Activated B cell treated with CpG ODN at 0.5 μM for 24 hours (primary cell): ENCODE measurements at regions of chr7 and their contacts with region 1.

Region 1: GRCh38 chr7:1432411-1433082 is 26.7 kb downstream of the MICALL2 start:
- DNase-seq: peak; percentile 72
- ATAC-seq: peak; percentile 97
- H3K4me3 Mint-ChIP-seq: no peak overlapping the region
- H3K27ac Mint-ChIP-seq: no peak overlapping the region
- H3K4me1 Mint-ChIP-seq: peaks cover 3% of the 10 kb centered on the region
- H3K27me3 Mint-ChIP-seq: peaks cover 4% of the 10 kb centered on the region
- CTCF ChIP-seq: peak; percentile 95

Region 2: GRCh38 chr7:1225441-1226185 is 206.9 kb before region 1 on chr7:
- CTCF ChIA-PET with region 1: no interaction called
- POLR2A ChIA-PET with region 1: no interaction called
- intact Hi-C with region 1: loop called (anchors 1 kb)
- DNase-seq: no peak
- ATAC-seq: no peak
- H3K4me3 Mint-ChIP-seq: no peak overlapping the region
- H3K27ac Mint-ChIP-seq: peak overlapping the region; percentile 9
- H3K4me1 Mint-ChIP-seq: no peaks in the 10 kb centered on the region
- H3K27me3 Mint-ChIP-seq: peaks cover 51% of the 10 kb centered on the region
- CTCF ChIP-seq: no peak

Region 3: GRCh38 chr7:1242606-1243289 is 189.8 kb before region 1 on chr7:
- CTCF ChIA-PET with region 1: no interaction called
- POLR2A ChIA-PET with region 1: no interaction called
- intact Hi-C with region 1: loop called (anchors 2 kb)
- DNase-seq: no peak
- ATAC-seq: no peak
- H3K4me3 Mint-ChIP-seq: no peak overlapping the region
- H3K27ac Mint-ChIP-seq: no peak overlapping the region
- H3K4me1 Mint-ChIP-seq: peaks cover 2% of the 10 kb centered on the region
- H3K27me3 Mint-ChIP-seq: peaks cover 51% of the 10 kb centered on the region
- CTCF ChIP-seq: no peak

Region 4: GRCh38 chr7:1368682-1369571 is 63.6 kb before region 1 on chr7:
- CTCF ChIA-PET with region 1: no interaction called
- POLR2A ChIA-PET with region 1: no interaction called
- intact Hi-C with region 1: no loop called
- DNase-seq: no peak
- ATAC-seq: peak; percentile 58
- H3K4me3 Mint-ChIP-seq: peak overlapping the region; percentile 38
- H3K27ac Mint-ChIP-seq: no peak overlapping the region
- H3K4me1 Mint-ChIP-seq: peaks cover 2% of the 10 kb centered on the region
- H3K27me3 Mint-ChIP-seq: peaks cover 44% of the 10 kb centered on the region
- CTCF ChIP-seq: no peak

Region 5: GRCh38 chr7:1473864-1474512 is 41.4 kb after region 1 on chr7:
- CTCF ChIA-PET with region 1: no interaction called
- POLR2A ChIA-PET with region 1: no interaction called
- intact Hi-C with region 1: loop called (anchors 2 kb)
- DNase-seq: peak; percentile 68
- ATAC-seq: peak; percentile 81
- H3K4me3 Mint-ChIP-seq: no peak overlapping the region
- H3K27ac Mint-ChIP-seq: no peak overlapping the region
- H3K4me1 Mint-ChIP-seq: no peaks in the 10 kb centered on the region
- H3K27me3 Mint-ChIP-seq: no peaks in the 10 kb centered on the region
- CTCF ChIP-seq: no peak